Naive thymus-derived CD8-positive, alpha-beta T cell (primary cell): ENCODE measurements at regions of chr10 and their contacts with region 1.

Region 1: DNA sequence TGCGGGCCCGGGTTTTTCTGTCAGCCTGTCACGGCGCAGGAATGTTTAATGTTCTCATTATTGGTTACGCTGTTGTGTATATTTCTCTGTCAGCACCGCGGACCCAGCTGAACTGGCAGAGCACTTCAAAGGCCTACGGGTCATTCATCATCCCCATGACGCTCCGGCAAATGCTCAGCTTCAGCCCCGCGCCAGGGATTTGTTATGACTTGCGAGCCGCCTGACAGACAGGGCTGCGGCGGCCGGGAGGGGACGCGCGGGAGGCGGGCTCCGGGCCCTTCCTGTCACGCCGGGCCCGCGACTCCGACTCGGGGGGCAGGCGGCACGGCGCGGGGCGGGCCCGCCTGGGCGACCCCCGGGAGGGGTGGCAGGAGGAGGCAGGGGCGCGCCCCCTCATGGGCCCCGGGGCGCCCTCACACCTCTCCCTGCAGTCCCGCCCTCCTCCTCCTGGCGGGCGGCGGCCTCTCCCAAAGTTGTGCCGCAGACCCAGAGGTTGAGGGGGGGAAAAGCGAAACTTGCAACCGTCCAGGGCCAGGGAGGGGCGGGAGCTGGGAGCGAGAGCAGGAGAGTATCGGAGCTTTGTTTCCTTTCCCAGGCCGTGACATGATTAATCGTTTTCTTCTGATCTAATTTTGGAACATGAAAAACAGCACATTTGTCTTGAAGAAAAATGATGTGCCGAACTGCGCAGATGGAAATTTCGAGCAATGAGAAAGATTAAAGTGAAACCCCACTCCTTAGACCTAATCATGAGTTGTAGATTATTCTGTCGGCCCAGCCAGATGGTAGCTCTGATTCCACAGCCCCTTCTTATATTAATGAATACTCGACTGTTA is 59.3 kb upstream of the COMTD1 start:
- DNase-seq: peak; percentile 45 to 80 (median 60)
- ATAC-seq: peak; percentile 84 to 86
- H3K4me3 Mint-ChIP-seq: peak overlapping the region in 9 of 10 donors; percentile 80 to 92 (median 87)
- H3K27ac Mint-ChIP-seq: peak overlapping the region in 8 of 10 donors; percentile 69 to 91 (median 86)
- H3K4me1 Mint-ChIP-seq: peaks cover 0 to 7% (median 3%) of the 10 kb centered on the region in 4 donors
- H3K27me3 Mint-ChIP-seq: peaks cover 0 to 12% (median 3%) of the 10 kb centered on the region in 5 donors

Region 2: DNA sequence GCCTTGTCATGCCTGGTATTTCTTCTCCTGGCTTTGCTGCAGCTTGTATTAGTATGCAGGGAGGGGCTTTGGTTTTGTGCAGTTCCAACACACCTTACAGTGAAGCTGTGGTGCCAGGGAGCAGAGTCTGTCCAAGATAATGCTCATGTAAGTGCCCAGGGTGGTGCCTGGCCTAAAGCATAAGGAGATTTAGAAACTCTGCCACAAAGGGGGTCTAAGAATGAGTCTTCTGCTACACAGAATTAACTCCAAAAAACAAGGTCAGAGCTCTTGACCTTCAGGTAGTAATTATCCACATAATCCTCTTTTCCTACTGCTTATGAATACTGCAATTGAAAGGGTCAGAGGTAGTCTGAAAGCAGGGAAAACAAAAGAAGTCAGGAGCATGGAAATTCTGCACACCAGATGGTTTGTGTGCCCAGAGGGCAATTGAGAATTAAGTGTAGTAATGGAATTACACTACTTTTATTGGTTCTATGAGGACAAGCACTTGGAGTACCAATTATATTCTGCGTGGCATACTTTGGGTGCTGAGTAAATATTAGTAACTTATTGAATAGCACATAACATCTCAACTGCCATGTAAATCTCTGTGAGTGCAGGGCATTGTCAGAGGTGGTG is 347.2 kb before region 1 on chr10:
- POLR2A ChIA-PET with region 1: interaction called, 10 read pairs
- DNase-seq: no peak
- ATAC-seq: no peak
- H3K4me3 Mint-ChIP-seq: no peak overlapping the region
- H3K27ac Mint-ChIP-seq: peak overlapping the region in 7 of 10 donors; percentile 4 to 61 (median 33)
- H3K4me1 Mint-ChIP-seq: peaks cover 27 to 72% (median 47%) of the 10 kb centered on the region in 4 donors
- H3K27me3 Mint-ChIP-seq: no peaks in the 10 kb centered on the region